ENCODE measurements at regions of chr1 and their contacts with region 1.

Region 1: GRCh38 chr1:154404984-154405761 is at the start of gene IL6R:
- DNase-seq: peak; percentile 57 to 91 (median 76)
- ATAC-seq: peak; percentile 65
- H3K4me3 ChIP-seq: peak within 1 kb of the TSS; percentile 89
- H3K4me3 Mint-ChIP-seq: peak within 1 kb of the TSS; percentile 96
- H3K27ac ChIP-seq: peak within 1 kb of the TSS; percentile 81 to 92
- H3K27ac Mint-ChIP-seq: peak within 1 kb of the TSS; percentile 95
- H3K4me1 ChIP-seq: peaks cover 88% of the 10 kb centered on the region
- H3K4me1 Mint-ChIP-seq: peaks cover 84% of the 10 kb centered on the region
- H3K27me3 ChIP-seq: no peaks in the 10 kb centered on the region
- H3K27me3 Mint-ChIP-seq: no peaks in the 10 kb centered on the region
- CTCF ChIP-seq: peak; percentile 73
- total RNA-seq, gene IL6R: 31.7 to 35.0 TPM

Region 2: GRCh38 chr1:154075746-154076145 is 329.4 kb before region 1 on chr1:
- CTCF ChIA-PET with region 1: no interaction called
- POLR2A ChIA-PET with region 1: no interaction called
- intact Hi-C with region 1: no loop called
- DNase-seq: no peak
- ATAC-seq: no peak
- H3K4me3 ChIP-seq: no peak overlapping the region
- H3K4me3 Mint-ChIP-seq: no peak overlapping the region
- H3K27ac ChIP-seq: no peak overlapping the region
- H3K27ac Mint-ChIP-seq: no peak overlapping the region
- H3K4me1 ChIP-seq: no peaks in the 10 kb centered on the region
- H3K4me1 Mint-ChIP-seq: no peaks in the 10 kb centered on the region
- H3K27me3 ChIP-seq: peaks cover 0 to 5% of the 10 kb centered on the region in 2 experiments
- H3K27me3 Mint-ChIP-seq: peaks cover 15% of the 10 kb centered on the region
- CTCF ChIP-seq: no peak

Region 3: DNA sequence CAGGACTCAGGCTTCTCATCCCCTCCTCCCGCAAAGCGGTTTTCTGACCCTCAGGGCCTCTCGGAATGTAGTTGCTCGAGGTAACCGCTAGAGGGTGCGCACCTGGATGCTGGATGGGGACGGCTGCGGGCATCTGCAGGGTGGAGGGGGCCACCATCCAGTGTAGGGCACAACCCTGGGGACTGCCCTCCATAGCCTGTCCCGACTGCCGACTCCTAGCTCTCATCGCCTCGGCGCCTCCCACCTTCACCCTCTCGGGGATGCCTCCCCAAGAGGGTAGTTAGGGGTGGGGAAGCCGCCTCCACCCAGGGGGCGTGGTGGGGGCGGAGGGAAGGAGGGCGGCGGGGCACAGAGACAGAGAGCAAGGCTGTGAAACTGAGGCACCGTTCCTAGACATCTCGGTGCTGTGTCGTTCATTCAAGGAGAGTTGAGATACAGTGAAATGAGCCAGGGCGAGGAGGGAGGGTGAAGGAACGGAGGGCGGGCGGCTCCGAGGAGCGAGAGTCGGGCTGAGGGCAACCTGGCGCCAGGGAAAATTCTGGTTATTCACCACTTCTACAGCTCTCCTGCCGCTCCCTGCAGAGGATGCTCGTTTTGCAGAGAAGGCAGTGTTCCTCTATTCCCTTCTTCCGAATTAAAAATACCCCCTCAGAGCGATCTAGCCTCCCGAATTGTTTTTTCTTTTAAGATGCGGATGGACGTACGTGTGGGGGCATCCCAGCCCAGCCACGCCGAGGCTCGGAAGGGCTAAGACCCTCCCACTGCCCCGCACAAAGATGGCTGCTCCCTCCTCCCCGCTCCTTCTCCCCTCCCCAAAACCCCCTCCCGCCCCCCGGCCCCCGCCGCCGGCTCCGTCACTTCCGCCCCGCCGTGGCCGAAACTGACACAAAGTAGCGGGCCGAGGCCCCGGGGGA is 80.2 kb before region 1 on chr1 and contains the start of gene ATP8B2:
- CTCF ChIA-PET with region 1: interaction called, 3 read pairs
- POLR2A ChIA-PET with region 1: interaction called, 11 read pairs
- intact Hi-C with region 1: no loop called
- DNase-seq: peak; percentile 68 to 90 (median 74)
- ATAC-seq: peak; percentile 57
- H3K4me3 ChIP-seq: peak within 1 kb of the TSS; percentile 70
- H3K4me3 Mint-ChIP-seq: peak within 1 kb of the TSS; percentile 94
- H3K27ac ChIP-seq: peak within 1 kb of the TSS; percentile 80 to 86
- H3K27ac Mint-ChIP-seq: peak within 1 kb of the TSS; percentile 90
- H3K4me1 ChIP-seq: peaks cover 52% of the 10 kb centered on the region
- H3K4me1 Mint-ChIP-seq: peaks cover 36% of the 10 kb centered on the region
- H3K27me3 ChIP-seq: no peaks in the 10 kb centered on the region
- H3K27me3 Mint-ChIP-seq: no peaks in the 10 kb centered on the region
- CTCF ChIP-seq: peak; percentile 95
- total RNA-seq, gene ATP8B2: 72.7 to 80.7 TPM

Region 4: DNA sequence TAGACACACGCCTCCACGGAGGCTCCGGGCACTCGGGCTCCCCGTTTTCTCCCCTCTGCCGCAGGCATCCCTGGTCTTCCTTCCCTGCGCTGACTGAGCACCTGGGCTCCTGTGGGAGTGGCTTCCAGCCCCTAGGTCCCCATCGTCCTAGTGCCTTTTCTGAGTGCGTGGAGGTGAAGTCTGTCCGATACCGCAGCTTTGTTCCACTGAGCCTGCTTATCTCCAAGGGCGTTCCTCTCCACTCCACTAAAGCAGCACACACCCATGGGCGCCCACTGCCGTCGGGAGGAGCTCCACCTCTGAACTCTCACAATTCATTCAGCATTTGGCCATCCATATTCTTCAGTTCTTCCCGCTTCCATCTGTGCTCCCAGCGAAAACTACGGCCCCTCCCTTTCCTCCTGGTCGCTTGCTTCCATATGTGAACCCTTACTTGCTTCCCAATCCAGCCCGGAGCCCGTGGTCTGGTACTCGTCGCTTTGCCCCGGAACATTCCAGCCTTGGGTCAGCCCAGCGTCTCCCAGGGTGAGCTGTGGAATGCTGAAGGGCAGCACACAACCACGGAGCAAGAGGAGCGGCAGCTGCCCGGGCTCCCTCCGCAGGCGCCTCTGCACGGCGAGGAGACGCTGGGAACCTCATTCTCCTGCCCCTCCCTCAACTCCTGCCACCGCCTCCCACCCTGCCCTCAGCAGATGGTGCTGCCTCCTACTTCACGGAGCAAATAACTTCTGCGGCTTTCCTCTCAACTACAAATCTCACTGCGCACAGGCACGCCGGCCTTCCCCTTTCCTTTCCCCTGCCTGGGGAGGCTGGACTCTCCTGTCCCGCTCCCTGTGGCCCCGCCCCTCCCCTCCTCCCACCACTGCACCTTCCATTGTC is 52.4 kb before region 1 on chr1:
- CTCF ChIA-PET with region 1: interaction called, 6 read pairs
- POLR2A ChIA-PET with region 1: interaction called, 12 read pairs
- intact Hi-C with region 1: loop called (anchors 2 kb)
- DNase-seq: peak in 11 of 14 experiments; percentile 22 to 80 (median 53)
- ATAC-seq: peak; percentile 82
- H3K4me3 ChIP-seq: peak overlapping the region; percentile 64
- H3K4me3 Mint-ChIP-seq: peak overlapping the region; percentile 92
- H3K27ac ChIP-seq: peak overlapping the region; percentile 40 to 55
- H3K27ac Mint-ChIP-seq: peak overlapping the region; percentile 75
- H3K4me1 ChIP-seq: peaks cover 45% of the 10 kb centered on the region
- H3K4me1 Mint-ChIP-seq: peaks cover 54% of the 10 kb centered on the region
- H3K27me3 ChIP-seq: no peaks in the 10 kb centered on the region
- H3K27me3 Mint-ChIP-seq: no peaks in the 10 kb centered on the region
- CTCF ChIP-seq: peak; percentile 10

Region 5: GRCh38 chr1:154419620-154420571 is 14.7 kb after region 1 on chr1:
- CTCF ChIA-PET with region 1: interaction called, 6 read pairs
- POLR2A ChIA-PET with region 1: interaction called, 178 read pairs
- intact Hi-C with region 1: no loop called
- DNase-seq: peak in 13 of 14 experiments; percentile 47 to 79 (median 64)
- ATAC-seq: peak; percentile 73
- H3K4me3 ChIP-seq: peak overlapping the region; percentile 41
- H3K4me3 Mint-ChIP-seq: peak overlapping the region; percentile 74
- H3K27ac ChIP-seq: peak overlapping the region; percentile 69 to 85
- H3K27ac Mint-ChIP-seq: peak overlapping the region; percentile 91
- H3K4me1 ChIP-seq: peaks cover 96% of the 10 kb centered on the region
- H3K4me1 Mint-ChIP-seq: peaks cover 92% of the 10 kb centered on the region
- H3K27me3 ChIP-seq: no peaks in the 10 kb centered on the region
- H3K27me3 Mint-ChIP-seq: no peaks in the 10 kb centered on the region
- CTCF ChIP-seq: no peak

Region 6: GRCh38 chr1:154463512-154463990 is 58.4 kb after region 1 on chr1:
- CTCF ChIA-PET with region 1: interaction called, 4 read pairs
- POLR2A ChIA-PET with region 1: interaction called, 26 read pairs
- intact Hi-C with region 1: loop called (anchors 2 kb)
- DNase-seq: peak; percentile 47 to 87 (median 70)
- ATAC-seq: peak; percentile 71
- H3K4me3 ChIP-seq: no peak overlapping the region
- H3K4me3 Mint-ChIP-seq: peak overlapping the region; percentile 87
- H3K27ac ChIP-seq: peak overlapping the region; percentile 40 to 59
- H3K27ac Mint-ChIP-seq: peak overlapping the region; percentile 93
- H3K4me1 ChIP-seq: peaks cover 95% of the 10 kb centered on the region
- H3K4me1 Mint-ChIP-seq: peaks cover 82% of the 10 kb centered on the region
- H3K27me3 ChIP-seq: no peaks in the 10 kb centered on the region
- H3K27me3 Mint-ChIP-seq: no peaks in the 10 kb centered on the region
- CTCF ChIP-seq: no peak

Region 7: DNA sequence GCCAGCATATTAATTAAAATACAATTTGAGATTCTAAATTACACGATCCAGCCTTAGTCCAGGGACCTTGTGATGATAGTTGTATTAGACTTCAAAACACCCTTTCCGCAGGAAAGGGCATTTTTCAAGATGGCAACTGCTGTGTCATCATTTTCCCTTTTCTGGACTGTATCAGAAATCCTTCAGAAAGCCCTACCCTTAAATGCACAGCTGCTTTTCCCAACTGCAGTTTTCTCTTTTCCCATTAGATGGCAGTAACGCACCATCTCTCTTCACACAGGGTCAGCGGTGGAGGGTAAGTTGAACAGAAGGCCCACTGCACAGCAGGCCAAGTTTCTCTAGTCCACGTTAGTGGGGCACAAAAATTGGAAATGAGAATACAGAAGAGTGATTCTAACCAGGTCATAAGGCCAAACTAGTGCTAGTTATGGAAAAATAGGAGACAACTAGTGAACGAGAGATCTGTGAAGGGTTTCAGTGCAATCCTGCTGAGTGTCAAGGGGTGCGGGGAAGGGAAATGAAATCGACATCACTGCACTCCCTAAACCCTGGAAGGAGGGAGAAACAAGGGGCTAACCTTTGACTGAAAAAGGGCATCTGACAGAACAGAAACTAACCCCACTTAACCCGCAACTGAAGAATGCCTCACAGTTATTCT is 74.7 kb after region 1 on chr1:
- CTCF ChIA-PET with region 1: interaction called, 13 read pairs
- POLR2A ChIA-PET with region 1: interaction called, 9 read pairs
- intact Hi-C with region 1: loop called (anchors 1 to 2 kb)
- DNase-seq: peak in 13 of 14 experiments; percentile 23 to 84 (median 43)
- ATAC-seq: peak; percentile 91
- H3K4me3 ChIP-seq: no peak overlapping the region
- H3K4me3 Mint-ChIP-seq: no peak overlapping the region
- H3K27ac ChIP-seq: no peak overlapping the region
- H3K27ac Mint-ChIP-seq: no peak overlapping the region
- H3K4me1 ChIP-seq: peaks cover 7% of the 10 kb centered on the region
- H3K4me1 Mint-ChIP-seq: peaks cover 20% of the 10 kb centered on the region
- H3K27me3 ChIP-seq: no peaks in the 10 kb centered on the region
- H3K27me3 Mint-ChIP-seq: no peaks in the 10 kb centered on the region
- CTCF ChIP-seq: peak; percentile 90

Region 8: GRCh38 chr1:154730259-154730658 is 325.1 kb after region 1 on chr1:
- CTCF ChIA-PET with region 1: no interaction called
- POLR2A ChIA-PET with region 1: no interaction called
- intact Hi-C with region 1: no loop called
- DNase-seq: no peak
- ATAC-seq: no peak
- H3K4me3 ChIP-seq: no peak overlapping the region
- H3K4me3 Mint-ChIP-seq: no peak overlapping the region
- H3K27ac ChIP-seq: no peak overlapping the region
- H3K27ac Mint-ChIP-seq: no peak overlapping the region
- H3K4me1 ChIP-seq: peaks cover 2% of the 10 kb centered on the region
- H3K4me1 Mint-ChIP-seq: no peaks in the 10 kb centered on the region
- H3K27me3 ChIP-seq: peaks cover 0 to 2% of the 10 kb centered on the region in 2 experiments
- H3K27me3 Mint-ChIP-seq: no peaks in the 10 kb centered on the region
- CTCF ChIP-seq: no peak

Region 9: GRCh38 chr1:155063550-155064110 is 658.5 kb after region 1 on chr1 and contains the start of gene EFNA4:
- CTCF ChIA-PET with region 1: no interaction called
- POLR2A ChIA-PET with region 1: no interaction called
- intact Hi-C with region 1: loop called in 1 of 2 experiments (anchors 5 kb)
- DNase-seq: peak; percentile 69 to 92 (median 80)
- ATAC-seq: peak; percentile 90
- H3K4me3 ChIP-seq: peak within 1 kb of the TSS; percentile 76
- H3K4me3 Mint-ChIP-seq: peak within 1 kb of the TSS; percentile 96
- H3K27ac ChIP-seq: peak within 1 kb of the TSS in 1 of 2 donors; percentile 61
- H3K27ac Mint-ChIP-seq: peak within 1 kb of the TSS; percentile 70
- H3K4me1 ChIP-seq: peaks cover 41% of the 10 kb centered on the region
- H3K4me1 Mint-ChIP-seq: peaks cover 32% of the 10 kb centered on the region
- H3K27me3 ChIP-seq: no peaks in the 10 kb centered on the region
- H3K27me3 Mint-ChIP-seq: no peaks in the 10 kb centered on the region
- CTCF ChIP-seq: no peak
- total RNA-seq, gene EFNA4: 2.4 to 3.3 TPM